Psoas muscle (tissue), 8 donors: ENCODE measurements at regions of chr6 and their contacts with region 1.

Region 1: GRCh38 chr6:109073344-109074132 is 21.1 kb downstream of the SESN1 start:
- DNase-seq: no peak
- ATAC-seq: peak; percentile 48 to 69 (median 64)
- H3K4me3 ChIP-seq: peak overlapping the region; percentile 15
- H3K27ac ChIP-seq: peak overlapping the region; percentile 98
- H3K4me1 ChIP-seq: peaks cover 85% of the 10 kb centered on the region
- H3K27me3 ChIP-seq: no peaks in the 10 kb centered on the region
- CTCF ChIP-seq: peak; percentile 70

Region 2: DNA sequence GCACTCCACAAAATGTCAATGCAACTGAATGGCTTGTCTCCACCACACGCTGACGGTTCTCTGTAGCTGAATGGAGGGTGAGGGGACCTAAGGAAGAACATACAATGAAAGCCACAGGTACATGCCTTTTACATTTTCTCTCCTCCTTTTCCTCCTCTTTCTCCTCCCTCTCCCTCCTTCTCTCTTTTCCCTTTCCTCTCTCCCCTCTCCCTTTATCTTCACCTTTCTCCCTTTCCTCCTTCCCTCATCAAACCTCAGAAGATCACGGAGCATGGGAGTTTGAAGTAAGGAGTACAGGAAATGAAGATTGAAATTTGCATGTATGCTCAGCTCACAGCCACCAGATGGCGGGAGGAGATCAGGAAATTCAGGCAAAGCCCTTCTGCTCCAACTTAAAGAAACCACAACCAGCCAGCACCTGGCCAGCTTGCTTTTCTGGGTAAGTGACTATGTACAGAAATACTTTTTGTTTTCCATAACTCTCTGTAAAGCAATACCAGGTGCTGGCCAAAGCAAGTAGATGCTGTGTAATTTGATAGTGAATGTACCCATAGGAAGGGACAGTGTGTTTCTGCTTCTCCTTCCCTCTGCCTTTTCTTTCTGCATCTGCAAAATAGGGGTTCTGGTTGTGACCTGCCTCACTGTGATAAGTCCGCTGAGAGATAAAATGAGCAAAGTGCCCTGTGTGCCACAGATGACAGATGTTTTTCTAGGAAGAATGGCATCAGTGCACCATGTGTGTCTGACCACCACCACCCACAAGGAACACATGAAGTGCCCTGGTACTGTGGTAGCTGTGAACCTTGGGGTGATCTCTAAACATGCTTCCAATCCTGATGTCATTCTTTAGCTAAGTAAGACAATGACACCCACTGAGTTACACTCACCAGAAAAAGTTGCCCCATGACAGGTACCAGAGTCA is 531.4 kb before region 1 on chr6:
- intact Hi-C with region 1: loop called (anchors 2 to 5 kb)
- DNase-seq: peak; percentile 62 to 83
- ATAC-seq: peak; percentile 86 to 94 (median 90)
- H3K4me3 ChIP-seq: peak overlapping the region; percentile 14
- H3K27ac ChIP-seq: peak overlapping the region; percentile 67
- H3K4me1 ChIP-seq: peaks cover 28% of the 10 kb centered on the region
- H3K27me3 ChIP-seq: no peaks in the 10 kb centered on the region
- CTCF ChIP-seq: peak; percentile 88

Region 3: DNA sequence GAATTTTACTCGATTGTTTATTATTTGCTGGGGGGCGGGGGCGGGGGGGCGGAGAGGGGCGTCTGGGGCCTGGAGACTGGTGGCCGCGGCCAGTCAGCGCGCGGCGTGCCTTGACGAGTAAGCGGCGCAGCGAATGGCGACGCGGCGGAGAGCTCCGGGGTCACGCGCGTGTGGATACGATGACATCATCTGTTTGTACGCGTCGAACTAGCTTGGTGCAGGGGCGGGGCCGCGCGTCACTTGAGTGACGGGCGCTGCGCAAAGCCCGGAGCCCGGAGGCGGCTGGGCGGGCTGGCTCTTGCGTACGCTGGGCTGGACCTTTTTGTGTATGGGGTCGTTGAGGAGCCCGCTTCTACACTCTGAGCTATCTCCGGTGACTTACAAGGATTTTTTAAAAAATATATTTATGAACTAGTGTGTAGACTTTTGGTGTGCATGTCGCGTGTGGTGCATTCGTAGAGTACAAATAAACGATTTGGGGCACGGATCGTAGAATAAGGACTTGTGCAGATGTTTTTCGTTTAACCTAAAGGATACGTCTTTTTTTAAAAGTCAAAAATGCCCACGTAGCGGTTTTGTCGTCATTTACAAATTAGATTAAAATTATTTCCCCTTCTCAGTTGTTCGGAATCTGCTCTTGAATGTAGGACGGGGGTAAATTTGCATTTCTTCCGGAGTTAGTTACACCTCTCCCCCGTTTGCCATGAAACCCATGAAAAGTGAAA is 515.0 kb before region 1 on chr6:
- intact Hi-C with region 1: loop called in 1 of 2 experiments (anchors 5 kb)
- DNase-seq: peak; percentile 99
- ATAC-seq: peak; percentile 64 to 75 (median 66)
- H3K4me3 ChIP-seq: peak overlapping the region; percentile 76
- H3K27ac ChIP-seq: peak overlapping the region; percentile 95
- H3K4me1 ChIP-seq: peaks cover 35% of the 10 kb centered on the region
- H3K27me3 ChIP-seq: no peaks in the 10 kb centered on the region
- CTCF ChIP-seq: no peak

Region 4: DNA sequence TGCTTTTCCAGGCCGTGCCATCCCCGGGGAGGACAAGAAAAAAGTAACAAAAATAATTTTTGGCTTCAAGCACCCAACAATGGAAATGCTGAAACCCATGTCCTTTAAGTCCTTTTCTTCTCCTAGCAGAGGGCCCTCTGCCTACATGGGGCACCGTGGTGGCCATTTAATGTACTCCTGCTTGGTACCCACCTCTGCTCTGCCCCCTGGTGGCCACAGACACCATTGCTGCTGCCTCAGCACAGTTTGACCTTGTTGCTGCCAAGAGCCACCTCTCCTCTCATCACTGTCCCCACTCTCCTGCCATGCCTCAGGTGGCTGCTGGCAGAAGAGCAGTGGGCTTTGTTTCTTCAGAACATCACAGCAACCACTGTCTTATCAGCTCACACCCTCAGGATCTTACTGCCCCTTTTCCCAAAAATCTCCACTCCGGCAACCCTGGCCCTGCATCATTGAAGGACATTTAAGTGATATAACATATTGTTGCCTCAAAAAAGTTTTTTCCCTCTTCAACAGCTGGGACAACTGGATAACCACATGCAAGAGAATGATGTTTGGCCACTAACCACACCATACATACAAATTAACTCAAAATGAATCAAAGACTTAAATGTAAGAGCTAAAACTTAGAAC is 238.2 kb before region 1 on chr6:
- intact Hi-C with region 1: loop called (anchors 5 to 10 kb)
- DNase-seq: peak; percentile 88 to 93
- ATAC-seq: peak; percentile 97 to 99 (median 98)
- H3K4me3 ChIP-seq: no peak overlapping the region
- H3K27ac ChIP-seq: no peak overlapping the region
- H3K4me1 ChIP-seq: no peaks in the 10 kb centered on the region
- H3K27me3 ChIP-seq: no peaks in the 10 kb centered on the region
- CTCF ChIP-seq: peak; percentile 97

Region 5: GRCh38 chr6:108896111-108896661 is 177.4 kb before region 1 on chr6:
- intact Hi-C with region 1: loop called in 1 of 2 experiments (anchors 2 kb)
- DNase-seq: no peak
- ATAC-seq: peak in 1 of 4 donors; percentile 39
- H3K4me3 ChIP-seq: no peak overlapping the region
- H3K27ac ChIP-seq: peak overlapping the region; percentile 78
- H3K4me1 ChIP-seq: peaks cover 37% of the 10 kb centered on the region
- H3K27me3 ChIP-seq: no peaks in the 10 kb centered on the region
- CTCF ChIP-seq: no peak

Region 6: DNA sequence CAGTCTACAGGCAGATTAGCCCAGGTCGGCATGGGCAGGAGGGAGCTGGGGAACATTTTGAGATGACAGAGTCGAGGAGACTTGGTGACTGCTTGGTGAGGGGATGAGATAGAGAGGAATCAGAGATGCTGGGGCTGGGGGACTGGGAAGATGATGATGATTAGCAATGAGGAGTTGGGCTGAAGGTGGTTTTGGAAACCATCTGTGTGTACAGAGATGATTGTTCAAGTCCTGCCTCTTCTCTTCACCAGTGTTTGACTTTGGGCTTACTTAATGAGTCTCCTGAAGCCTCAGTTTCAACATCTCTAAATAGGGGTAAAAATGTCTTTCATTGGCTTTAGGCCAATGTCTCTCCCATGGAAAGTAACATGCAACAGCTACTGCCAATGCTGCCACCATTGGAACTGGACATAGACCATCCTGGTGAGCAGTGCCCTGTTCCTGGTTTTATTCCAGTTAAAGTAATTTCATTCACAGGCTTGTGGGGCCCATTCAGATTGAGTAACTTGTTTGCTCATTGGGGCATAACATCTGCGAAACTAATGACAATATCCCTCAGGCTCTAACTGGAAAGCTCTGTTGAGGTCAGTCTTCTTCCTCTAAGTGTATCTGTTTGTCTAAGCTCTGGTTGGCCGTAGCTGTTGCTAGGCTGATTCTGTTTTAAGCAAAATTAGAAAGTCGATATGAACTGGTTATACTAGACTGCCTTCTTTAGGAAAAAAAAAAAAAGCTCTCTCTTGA is 126.3 kb before region 1 on chr6:
- intact Hi-C with region 1: loop called (anchors 5 kb)
- DNase-seq: no peak
- ATAC-seq: peak in 3 of 4 donors; percentile 17 to 27 (median 22)
- H3K4me3 ChIP-seq: no peak overlapping the region
- H3K27ac ChIP-seq: peak overlapping the region; percentile 91
- H3K4me1 ChIP-seq: peaks cover 74% of the 10 kb centered on the region
- H3K27me3 ChIP-seq: no peaks in the 10 kb centered on the region
- CTCF ChIP-seq: no peak

Region 7: DNA sequence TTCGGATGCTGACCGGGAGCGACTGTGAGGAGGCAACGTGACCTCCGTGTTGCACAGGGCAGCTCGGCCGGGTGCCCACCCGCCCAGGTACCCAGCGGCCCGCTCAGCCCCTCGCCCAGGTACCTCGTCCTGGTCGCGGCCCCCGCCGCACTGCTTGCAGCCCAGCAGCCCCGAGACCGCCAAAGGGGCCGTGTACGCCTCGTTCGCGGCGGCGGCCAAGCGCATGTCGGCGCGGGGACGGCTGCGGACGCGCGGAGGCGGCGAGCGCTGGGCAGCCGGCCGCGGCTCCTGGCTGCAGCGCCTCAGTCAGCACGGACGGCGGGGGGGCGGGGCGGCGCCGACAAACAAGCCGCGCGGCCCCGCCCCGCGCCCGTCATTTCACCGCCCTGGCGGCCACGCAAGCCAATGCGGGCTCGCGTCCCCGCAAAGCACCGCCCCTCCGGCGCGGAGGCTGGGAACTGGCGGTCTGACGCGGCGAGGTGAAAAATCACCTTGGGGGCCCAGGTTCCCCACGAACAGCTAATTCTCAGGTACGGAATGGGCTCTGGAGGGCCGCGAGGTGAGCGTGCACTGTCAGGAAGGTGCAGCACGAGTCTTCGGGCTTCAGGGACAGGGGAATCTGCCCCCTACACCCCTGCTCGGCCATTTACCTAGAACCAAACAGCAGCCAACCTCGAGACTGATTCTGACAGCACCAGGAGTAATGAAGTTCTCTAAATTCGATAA is 64.1 kb before region 1 on chr6:
- intact Hi-C with region 1: loop called (anchors 5 kb)
- DNase-seq: peak; percentile 97
- ATAC-seq: peak; percentile 94 to 98 (median 95)
- H3K4me3 ChIP-seq: peak overlapping the region; percentile 71
- H3K27ac ChIP-seq: peak overlapping the region; percentile 97
- H3K4me1 ChIP-seq: peaks cover 48% of the 10 kb centered on the region
- H3K27me3 ChIP-seq: no peaks in the 10 kb centered on the region
- CTCF ChIP-seq: peak; percentile 15

Region 8: GRCh38 chr6:109202409-109203284 is 129.1 kb after region 1 on chr6:
- intact Hi-C with region 1: no loop called
- DNase-seq: no peak
- ATAC-seq: no peak
- H3K4me3 ChIP-seq: no peak overlapping the region
- H3K27ac ChIP-seq: no peak overlapping the region
- H3K4me1 ChIP-seq: no peaks in the 10 kb centered on the region
- H3K27me3 ChIP-seq: no peaks in the 10 kb centered on the region
- CTCF ChIP-seq: no peak

Region 9: DNA sequence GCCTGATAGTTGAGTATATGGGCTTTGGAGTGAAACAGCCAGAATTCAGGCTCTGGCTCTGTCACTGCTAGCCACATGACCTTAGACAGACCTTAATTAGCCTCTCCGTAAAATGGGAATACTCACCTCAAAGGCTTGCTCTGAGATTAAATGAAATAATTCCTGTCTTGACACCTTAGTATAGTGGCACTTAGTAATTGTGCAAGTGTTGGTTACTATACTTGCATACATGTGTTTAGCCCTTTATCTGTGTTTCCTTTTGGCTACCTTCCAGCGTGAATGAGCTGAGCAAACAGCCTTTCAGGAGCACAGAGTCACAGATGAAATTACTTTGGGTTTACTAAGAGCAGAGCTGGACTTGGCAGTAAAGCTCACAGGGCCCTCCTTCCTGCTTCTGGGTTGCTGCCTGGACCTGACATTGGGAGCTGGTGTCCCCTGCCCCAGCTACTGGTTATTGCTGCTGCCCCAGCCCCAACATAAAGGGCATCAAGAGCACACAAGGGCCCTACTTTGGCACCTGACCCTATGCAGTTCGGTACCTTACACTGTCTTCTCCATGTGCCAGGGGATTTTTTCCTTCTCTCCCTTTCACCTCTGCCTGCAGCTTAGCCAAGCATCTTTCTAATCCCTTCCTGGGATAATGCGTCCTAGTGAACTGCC is 276.0 kb after region 1 on chr6:
- intact Hi-C with region 1: no loop called
- DNase-seq: no peak
- ATAC-seq: peak; percentile 46 to 71 (median 60)
- H3K4me3 ChIP-seq: no peak overlapping the region
- H3K27ac ChIP-seq: peak overlapping the region; percentile 21
- H3K4me1 ChIP-seq: peaks cover 10% of the 10 kb centered on the region
- H3K27me3 ChIP-seq: no peaks in the 10 kb centered on the region
- CTCF ChIP-seq: no peak